ENCODE measurements at regions of chr1 and their contacts with region 1.

Region 1: DNA sequence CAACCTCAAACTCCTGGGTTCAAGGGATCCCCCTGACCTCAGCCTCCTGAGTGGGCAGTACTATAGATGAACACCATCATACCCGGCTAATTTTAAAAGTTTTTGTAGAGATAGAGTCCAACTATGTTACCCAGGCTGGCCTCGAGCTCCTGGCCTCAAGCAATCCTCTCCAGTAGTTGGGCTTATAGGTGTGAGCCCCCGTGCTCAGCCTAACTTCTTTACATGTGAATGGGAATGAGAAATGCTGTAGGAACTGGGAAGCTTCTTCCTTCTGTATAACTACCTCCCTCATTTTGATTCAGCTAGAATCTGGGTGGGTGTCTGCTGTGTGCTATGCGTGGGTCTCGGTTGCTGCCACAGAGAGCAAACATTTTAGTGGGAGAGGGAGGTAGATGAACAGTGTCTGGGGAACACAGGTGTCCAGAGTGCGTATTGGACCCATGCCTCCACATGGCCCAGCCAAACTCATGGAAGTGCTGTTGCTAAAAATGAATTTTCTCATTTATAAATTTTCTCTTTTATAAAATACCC is 150.6 kb downstream of the NOS1AP start:
- DNase-seq: no peak
- H3K4me3 ChIP-seq: no peak overlapping the region
- H3K27ac ChIP-seq: no peak overlapping the region
- H3K4me1 ChIP-seq: peaks cover 3% of the 10 kb centered on the region
- H3K27me3 ChIP-seq: peaks cover 2% of the 10 kb centered on the region
- CTCF ChIP-seq: no peak

Region 2: DNA sequence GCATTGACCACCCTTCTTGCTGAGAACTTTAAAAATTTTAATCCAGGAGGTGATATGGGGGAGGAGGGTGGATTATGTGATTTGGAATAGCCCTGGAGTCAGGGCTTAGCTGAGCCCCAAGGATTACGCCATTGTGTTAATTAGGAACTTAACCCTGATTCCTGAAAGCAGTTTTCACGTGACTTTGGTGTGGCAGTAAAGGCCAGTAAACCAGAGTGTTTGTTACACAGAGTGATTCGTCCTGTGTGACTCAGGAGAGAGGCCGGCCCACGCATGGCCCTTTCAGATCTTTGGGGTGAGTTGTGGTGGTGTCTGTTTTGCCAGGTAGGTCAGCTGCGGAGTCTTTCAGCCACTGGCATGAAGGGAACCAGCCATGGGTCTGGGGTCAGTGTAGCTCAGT is 42.9 kb before region 1 on chr1:
- CTCF ChIA-PET with region 1: no interaction called
- dilution Hi-C with region 1: loop called (anchors 5 kb)
- in situ Hi-C with region 1: no loop called
- intact Hi-C with region 1: no loop called
- DNase-seq: peak; percentile 41
- H3K4me3 ChIP-seq: no peak overlapping the region
- H3K27ac ChIP-seq: no peak overlapping the region
- H3K4me1 ChIP-seq: no peaks in the 10 kb centered on the region
- H3K27me3 ChIP-seq: no peaks in the 10 kb centered on the region
- CTCF ChIP-seq: no peak